Activated naive CD4-positive, alpha-beta T cell treated with anti-CD3 and anti-CD28 coated beads for 36 hours (primary cell): ENCODE measurements at regions of chr12 and their contacts with region 1.

Region 1: GRCh38 chr12:68158432-68158831 is 1.1 kb downstream of the IFNG start:
- DNase-seq: no peak
- H3K4me3 Mint-ChIP-seq: peak overlapping the region; percentile 3
- H3K27ac Mint-ChIP-seq: peak overlapping the region; percentile 25
- H3K4me1 Mint-ChIP-seq: peaks cover 28% of the 10 kb centered on the region
- H3K27me3 Mint-ChIP-seq: no peaks in the 10 kb centered on the region

Region 2: GRCh38 chr12:68001486-68002466 is 156.7 kb before region 1 on chr12:
- CTCF ChIA-PET with region 1: interaction called, 4 read pairs
- intact Hi-C with region 1: loop called (anchors 1 kb)
- DNase-seq: no peak
- H3K4me3 Mint-ChIP-seq: no peak overlapping the region
- H3K27ac Mint-ChIP-seq: no peak overlapping the region
- H3K4me1 Mint-ChIP-seq: peaks cover 13% of the 10 kb centered on the region
- H3K27me3 Mint-ChIP-seq: no peaks in the 10 kb centered on the region

Region 3: DNA sequence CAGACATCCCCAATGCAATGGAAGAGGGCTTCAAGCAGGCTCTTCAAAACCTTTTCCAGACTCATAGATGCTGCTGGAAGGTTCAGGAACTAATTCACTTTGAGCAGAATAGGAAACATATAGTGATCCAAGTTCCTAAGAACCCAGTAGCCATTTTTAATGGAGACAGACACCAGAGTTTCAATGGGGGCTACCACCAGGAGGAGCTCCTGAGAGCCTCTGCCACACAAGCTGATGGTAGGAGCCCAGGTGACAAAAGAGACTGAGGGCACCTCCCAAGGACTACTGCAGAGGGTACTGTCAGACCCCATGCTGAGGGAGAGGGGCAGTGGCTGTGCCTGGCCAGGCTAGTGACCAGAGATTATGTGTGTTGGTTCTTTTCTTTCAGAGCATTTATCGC is 44.8 kb before region 1 on chr12:
- CTCF ChIA-PET with region 1: interaction called, 88 read pairs
- intact Hi-C with region 1: loop called (anchors 1 kb)
- DNase-seq: peak; percentile 55
- H3K4me3 Mint-ChIP-seq: no peak overlapping the region
- H3K27ac Mint-ChIP-seq: no peak overlapping the region
- H3K4me1 Mint-ChIP-seq: peaks cover 26% of the 10 kb centered on the region
- H3K27me3 Mint-ChIP-seq: no peaks in the 10 kb centered on the region

Region 4: GRCh38 chr12:68137335-68137830 is 21.0 kb before region 1 on chr12:
- CTCF ChIA-PET with region 1: interaction called, 20 read pairs
- intact Hi-C with region 1: loop called (anchors 2 kb)
- DNase-seq: peak; percentile 38
- H3K4me3 Mint-ChIP-seq: no peak overlapping the region
- H3K27ac Mint-ChIP-seq: peak overlapping the region; percentile 91
- H3K4me1 Mint-ChIP-seq: peaks cover 52% of the 10 kb centered on the region
- H3K27me3 Mint-ChIP-seq: no peaks in the 10 kb centered on the region

Region 5: DNA sequence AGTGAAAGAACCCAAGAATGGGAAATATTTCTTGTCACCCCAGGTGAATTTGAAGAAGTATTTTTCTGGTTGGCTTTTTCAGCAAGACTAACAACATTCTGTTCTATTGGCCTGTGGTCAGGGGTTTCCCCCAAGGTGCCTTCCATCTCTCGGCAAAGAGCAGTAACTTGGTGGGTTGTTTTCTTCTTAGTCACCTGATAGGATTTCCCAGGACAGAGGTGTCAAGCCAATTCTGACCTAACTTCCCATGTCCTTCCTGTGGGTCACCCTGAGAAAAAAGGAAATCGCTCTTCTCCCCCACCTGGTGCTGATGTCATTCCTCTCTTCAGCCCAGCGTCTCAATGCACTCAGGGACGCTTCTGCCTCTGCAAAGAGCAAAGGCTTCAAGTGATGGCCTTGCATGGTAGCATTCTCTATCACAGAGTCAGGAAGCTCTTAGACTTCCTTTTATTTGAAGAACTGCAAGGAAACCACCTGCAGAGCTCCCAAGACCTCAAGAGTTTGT is 17.2 kb after region 1 on chr12:
- CTCF ChIA-PET with region 1: interaction called, 10 read pairs
- intact Hi-C with region 1: loop called (anchors 1 kb)
- DNase-seq: peak; percentile 87
- H3K4me3 Mint-ChIP-seq: peak overlapping the region; percentile 62
- H3K27ac Mint-ChIP-seq: peak overlapping the region; percentile 89
- H3K4me1 Mint-ChIP-seq: peaks cover 78% of the 10 kb centered on the region
- H3K27me3 Mint-ChIP-seq: no peaks in the 10 kb centered on the region